Activated T-helper 1 cell treated with anti-CD3 and anti-CD28 coated beads, Interleukin-12 subunit alpha, Interleukin-12 subunit beta, Interleukin-2, Interleukin-4 antibody, amounts not matched to agents 30 ng/mL and 10 ng/mL and 1 ng/mL, durations not matched to agents 14 hours and 24 hours and 36 hours (primary cell): ENCODE measurements at regions of chr1 and their contacts with region 1.

Region 1: GRCh38 chr1:71049951-71050598 is 2.5 kb upstream of the PTGER3 start:
- DNase-seq: no peak
- H3K4me3 Mint-ChIP-seq: no peak overlapping the region
- H3K27ac Mint-ChIP-seq: no peak overlapping the region
- H3K4me1 Mint-ChIP-seq: peaks cover 20% of the 10 kb centered on the region
- H3K27me3 Mint-ChIP-seq: peaks cover 49% of the 10 kb centered on the region

Region 2: DNA sequence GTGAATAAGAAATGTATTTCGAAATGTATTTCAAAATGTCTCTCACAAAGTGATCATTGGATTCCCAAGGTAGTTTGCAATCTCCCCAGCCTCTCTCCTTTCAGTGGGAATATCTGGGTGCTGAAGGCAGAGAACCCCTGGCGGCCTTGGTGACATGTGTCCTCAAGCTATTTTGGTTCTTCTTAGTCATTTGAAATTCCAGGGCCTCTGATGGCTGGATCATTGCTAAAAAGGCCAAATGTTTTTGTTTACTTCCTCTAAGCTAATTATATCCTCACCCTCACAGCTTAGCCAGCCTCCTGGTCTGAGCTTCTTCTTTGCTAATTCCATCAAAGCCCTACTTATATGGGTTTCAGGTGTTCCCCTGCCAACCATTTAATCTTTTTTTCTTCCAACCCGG is 915.9 kb before region 1 on chr1:
- intact Hi-C with region 1: loop called (anchors 2 kb)
- DNase-seq: no peak
- H3K4me3 Mint-ChIP-seq: no peak overlapping the region
- H3K27ac Mint-ChIP-seq: no peak overlapping the region
- H3K4me1 Mint-ChIP-seq: peaks cover 6% of the 10 kb centered on the region
- H3K27me3 Mint-ChIP-seq: peaks cover 22% of the 10 kb centered on the region

Region 3: GRCh38 chr1:70528590-70529333 is 521.3 kb before region 1 on chr1:
- intact Hi-C with region 1: loop called (anchors 1 kb)
- DNase-seq: no peak
- H3K4me3 Mint-ChIP-seq: no peak overlapping the region
- H3K27ac Mint-ChIP-seq: no peak overlapping the region
- H3K4me1 Mint-ChIP-seq: no peaks in the 10 kb centered on the region
- H3K27me3 Mint-ChIP-seq: peaks cover 5% of the 10 kb centered on the region

Region 4: GRCh38 chr1:70685300-70686241 is 364.5 kb before region 1 on chr1:
- intact Hi-C with region 1: loop called (anchors 1 kb)
- DNase-seq: peak; percentile 31
- H3K4me3 Mint-ChIP-seq: no peak overlapping the region
- H3K27ac Mint-ChIP-seq: no peak overlapping the region
- H3K4me1 Mint-ChIP-seq: no peaks in the 10 kb centered on the region
- H3K27me3 Mint-ChIP-seq: no peaks in the 10 kb centered on the region

Region 5: DNA sequence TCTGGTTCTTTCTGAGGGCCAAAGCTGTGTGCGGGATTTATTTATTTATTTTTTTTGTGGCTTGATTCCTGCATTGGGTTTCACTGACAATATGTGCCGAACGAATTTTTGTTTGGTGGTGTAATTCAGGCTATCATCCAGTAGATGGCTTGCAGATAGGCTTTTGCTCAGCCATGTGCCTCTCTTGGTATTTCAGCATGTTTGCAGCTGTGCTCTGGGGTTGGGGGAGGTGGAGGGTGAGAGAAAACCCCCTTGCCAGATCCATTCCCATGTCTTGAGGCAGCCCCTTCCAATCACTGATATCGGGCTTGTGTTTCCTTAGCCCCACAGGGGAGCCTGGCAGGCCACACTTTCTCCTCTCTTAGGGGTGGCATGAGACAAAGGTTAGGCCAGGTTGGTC is 304.9 kb before region 1 on chr1:
- intact Hi-C with region 1: loop called (anchors 10 kb)
- DNase-seq: no peak
- H3K4me3 Mint-ChIP-seq: no peak overlapping the region
- H3K27ac Mint-ChIP-seq: no peak overlapping the region
- H3K4me1 Mint-ChIP-seq: no peaks in the 10 kb centered on the region
- H3K27me3 Mint-ChIP-seq: peaks cover 2% of the 10 kb centered on the region

Region 6: DNA sequence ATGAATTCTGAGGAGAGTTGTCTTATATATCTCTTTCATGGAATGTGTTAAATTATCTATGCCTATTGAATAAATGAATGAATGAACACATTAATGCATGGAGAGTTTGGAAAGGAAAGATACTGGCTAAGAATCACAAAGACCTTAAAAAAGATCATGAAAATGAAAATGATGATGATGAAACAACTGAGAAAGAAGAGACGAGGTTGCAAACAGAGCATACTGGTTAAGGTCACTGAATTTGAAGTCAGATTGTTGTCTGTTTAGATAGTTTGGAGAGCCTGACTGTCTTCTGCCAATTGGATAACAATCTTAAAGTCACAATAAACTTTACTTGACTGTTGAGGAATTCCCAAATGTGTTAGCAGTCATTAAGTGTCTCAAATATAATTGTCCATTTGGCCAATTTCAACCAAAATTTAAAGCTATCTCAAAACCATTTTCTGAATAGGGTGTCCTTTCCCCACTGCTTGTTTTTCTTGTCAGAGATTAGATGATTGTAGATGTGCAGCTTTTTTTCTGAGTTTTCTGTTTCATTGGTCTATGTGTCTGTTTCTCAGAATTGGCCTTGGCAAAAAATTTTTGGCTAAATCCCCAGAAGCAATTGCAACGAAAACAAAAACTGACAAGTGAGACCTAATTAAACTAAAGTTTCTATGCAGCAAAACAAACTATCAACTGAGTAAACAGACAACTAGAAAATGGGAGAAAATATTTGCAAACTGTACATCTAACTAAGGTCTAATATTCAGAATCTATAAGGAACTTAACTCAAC is 134.6 kb before region 1 on chr1:
- intact Hi-C with region 1: loop called (anchors 5 kb)
- DNase-seq: no peak
- H3K4me3 Mint-ChIP-seq: peak overlapping the region; percentile 32
- H3K27ac Mint-ChIP-seq: peak overlapping the region; percentile 79
- H3K4me1 Mint-ChIP-seq: peaks cover 14% of the 10 kb centered on the region
- H3K27me3 Mint-ChIP-seq: no peaks in the 10 kb centered on the region